Psoas muscle (tissue), 8 donors: ENCODE measurements at regions of chr5 and their contacts with region 1.

Region 1: DNA sequence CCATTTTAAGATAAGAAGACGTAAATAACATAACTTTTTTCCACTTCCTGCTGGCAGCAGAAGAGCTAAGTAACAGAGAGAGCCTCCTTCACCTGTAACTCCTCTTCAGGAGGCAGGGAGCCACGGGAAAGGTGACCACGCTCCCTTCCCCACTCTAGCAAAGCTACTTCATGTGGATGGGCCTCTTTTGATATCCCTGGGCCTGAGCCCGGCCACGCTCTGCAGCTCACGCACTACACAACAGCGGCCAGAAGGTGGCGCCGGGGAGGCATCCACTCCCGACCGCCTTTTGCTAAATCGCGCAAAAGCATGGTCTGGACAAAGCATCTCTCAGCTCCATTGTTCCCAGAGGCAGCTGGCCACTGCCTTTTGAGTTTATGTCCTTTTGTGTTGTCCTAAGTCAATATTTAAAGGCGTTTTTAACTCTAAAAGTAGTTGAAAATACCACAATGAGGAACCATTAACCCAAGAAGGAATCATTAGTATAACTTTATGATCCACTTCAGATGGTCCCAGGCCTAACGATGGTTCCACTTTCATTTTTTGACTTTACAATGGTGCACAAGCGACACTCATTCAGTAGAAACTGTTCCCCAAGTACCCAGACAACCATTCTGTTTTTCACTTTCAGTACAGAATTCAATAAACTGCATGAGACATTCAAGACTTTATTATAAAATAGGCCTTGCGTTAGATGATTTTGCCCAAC is 23.6 kb downstream of the CMBL start:
- DNase-seq: peak; percentile 87 to 92
- ATAC-seq: peak; percentile 45 to 61 (median 54)
- H3K4me3 ChIP-seq: no peak overlapping the region
- H3K27ac ChIP-seq: peak overlapping the region; percentile 50
- H3K4me1 ChIP-seq: peaks cover 40% of the 10 kb centered on the region
- H3K27me3 ChIP-seq: no peaks in the 10 kb centered on the region
- CTCF ChIP-seq: peak; percentile 94

Region 2: DNA sequence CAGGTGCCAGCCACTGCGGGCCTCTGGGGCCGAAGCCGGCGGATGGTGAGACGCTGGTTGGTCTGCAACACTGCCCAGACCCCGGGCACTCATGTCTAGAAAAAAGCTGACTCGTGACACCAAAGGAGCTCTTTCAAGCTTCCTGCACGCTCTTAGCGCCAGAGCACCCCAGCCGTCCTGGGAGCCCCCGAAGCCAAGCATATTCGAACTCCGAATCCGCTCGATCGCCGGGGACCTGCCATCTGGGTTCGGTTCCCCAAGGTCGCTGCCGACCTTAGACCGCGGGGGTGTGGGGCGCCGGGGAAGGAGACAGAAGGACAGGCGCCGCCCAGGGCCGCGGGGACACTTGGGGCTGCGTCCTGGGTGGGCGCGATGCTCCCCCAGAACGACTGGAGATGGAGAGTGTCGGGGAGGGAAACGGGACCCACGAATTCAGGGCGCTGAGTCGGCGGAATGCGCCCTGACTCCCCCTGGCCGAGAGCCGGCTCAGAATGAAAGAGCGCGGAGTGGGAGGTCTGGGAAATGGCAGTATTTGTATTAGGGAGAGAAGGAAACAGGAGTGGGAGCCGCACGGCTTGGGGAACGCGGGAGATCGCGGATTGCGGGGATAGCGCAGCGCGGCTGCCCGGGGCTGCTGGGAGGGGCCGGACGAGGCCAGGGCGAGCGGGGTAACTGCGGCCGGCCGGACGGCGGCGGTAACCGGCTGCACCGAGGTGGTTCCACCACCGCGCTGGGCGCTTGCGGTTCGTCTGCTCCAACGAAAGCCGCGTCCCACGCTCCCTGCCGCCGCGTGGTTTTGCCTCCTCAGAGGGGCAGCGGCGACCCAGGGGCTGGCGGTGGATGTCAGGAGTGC is 49.3 kb after region 1 on chr5:
- intact Hi-C with region 1: no loop called
- DNase-seq: peak; percentile 54 to 74
- ATAC-seq: peak; percentile 77 to 83 (median 82)
- H3K4me3 ChIP-seq: peak overlapping the region; percentile 75
- H3K27ac ChIP-seq: peak overlapping the region; percentile 77
- H3K4me1 ChIP-seq: peaks cover 37% of the 10 kb centered on the region
- H3K27me3 ChIP-seq: no peaks in the 10 kb centered on the region
- CTCF ChIP-seq: peak; percentile 30

Region 3: DNA sequence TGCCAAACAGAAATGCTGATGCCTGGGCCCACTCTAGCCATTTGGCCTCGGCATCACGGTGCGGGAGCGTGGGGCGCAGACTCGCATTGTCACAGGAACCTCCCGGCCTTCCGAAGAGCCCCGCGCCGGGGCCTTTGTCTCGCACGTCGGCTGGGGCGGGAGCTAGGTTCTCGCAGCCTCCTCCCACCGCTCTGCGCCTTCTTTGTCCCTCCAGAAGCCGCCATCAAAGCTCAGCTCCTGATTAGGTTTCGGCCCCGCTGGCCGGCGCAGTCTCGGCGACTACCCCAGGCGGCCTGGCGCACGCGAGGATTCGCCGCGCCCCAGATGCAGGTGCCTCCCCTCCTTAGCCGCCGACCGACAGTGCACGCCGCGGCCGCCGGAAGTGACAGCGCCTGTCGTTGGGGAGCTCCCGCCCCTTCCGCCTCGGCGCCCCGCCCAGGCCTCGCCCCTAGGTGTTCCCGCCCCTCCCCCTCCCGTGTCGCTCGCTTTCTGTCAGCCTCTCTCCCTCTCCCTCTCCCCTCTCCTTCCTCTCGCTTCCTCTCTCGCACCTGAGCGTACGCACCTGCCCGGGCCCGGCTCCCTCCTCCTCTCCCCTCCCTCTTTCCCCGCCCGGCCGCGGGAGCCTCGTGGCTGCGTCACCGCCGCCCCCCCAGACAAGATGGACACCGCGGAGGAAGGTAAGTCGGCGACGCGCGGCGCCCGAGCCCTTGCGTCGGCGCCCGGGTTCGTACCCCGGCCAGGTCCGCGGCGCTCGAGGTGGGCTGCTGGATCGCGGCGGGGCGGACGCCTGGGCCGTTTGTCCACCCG is 69.4 kb after region 1 on chr5 and contains the start of gene MARCHF6:
- intact Hi-C with region 1: loop called in 1 of 2 experiments (anchors 5 kb)
- DNase-seq: peak; percentile 95 to 98
- ATAC-seq: peak; percentile 96 to 98 (median 96)
- H3K4me3 ChIP-seq: peak within 1 kb of the TSS; percentile 95
- H3K27ac ChIP-seq: peak within 1 kb of the TSS; percentile 99
- H3K4me1 ChIP-seq: peaks cover 37% of the 10 kb centered on the region
- H3K27me3 ChIP-seq: no peaks in the 10 kb centered on the region
- CTCF ChIP-seq: no peak
- total RNA-seq, gene MARCHF6: 160 to 250 (median 193) TPM

Region 4: DNA sequence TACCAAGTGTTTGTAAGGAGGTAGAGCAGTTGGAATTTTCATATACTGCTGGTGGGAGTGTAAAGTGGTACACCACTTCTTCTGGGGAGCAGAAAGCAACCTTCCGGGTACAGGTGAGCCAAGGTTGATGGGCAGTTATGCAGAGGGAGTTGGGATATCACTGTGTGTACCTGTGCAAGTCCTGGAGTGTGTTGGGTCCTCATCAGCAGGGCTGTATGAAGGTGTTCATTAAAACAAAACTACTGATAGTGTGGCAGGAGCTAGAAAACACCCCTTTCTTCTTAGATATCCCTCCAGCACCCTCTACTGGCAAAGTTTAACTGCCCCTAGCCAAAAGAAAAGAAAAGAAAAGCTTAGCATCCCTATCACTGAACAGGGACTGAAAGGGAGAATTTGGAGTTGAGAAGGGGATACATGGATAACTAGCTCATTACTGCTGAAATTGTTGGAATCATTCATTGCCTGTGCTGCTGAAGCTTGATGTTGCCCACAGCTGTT is 80.2 kb after region 1 on chr5:
- intact Hi-C with region 1: loop called (anchors 5 to 10 kb)
- DNase-seq: no peak
- ATAC-seq: peak; percentile 42 to 70 (median 56)
- H3K4me3 ChIP-seq: no peak overlapping the region
- H3K27ac ChIP-seq: no peak overlapping the region
- H3K4me1 ChIP-seq: peaks cover 87% of the 10 kb centered on the region
- H3K27me3 ChIP-seq: no peaks in the 10 kb centered on the region
- CTCF ChIP-seq: peak; percentile 41

Region 5: GRCh38 chr5:10424124-10424731 is 140.1 kb after region 1 on chr5:
- intact Hi-C with region 1: loop called (anchors 5 kb)
- DNase-seq: no peak
- ATAC-seq: peak in 3 of 4 donors; percentile 59 to 85 (median 73)
- H3K4me3 ChIP-seq: no peak overlapping the region
- H3K27ac ChIP-seq: no peak overlapping the region
- H3K4me1 ChIP-seq: peaks cover 6% of the 10 kb centered on the region
- H3K27me3 ChIP-seq: no peaks in the 10 kb centered on the region
- CTCF ChIP-seq: peak; percentile 44

Region 6: GRCh38 chr5:10503997-10504793 is 220.1 kb after region 1 on chr5:
- intact Hi-C with region 1: no loop called
- DNase-seq: no peak
- ATAC-seq: peak; percentile 56 to 67 (median 60)
- H3K4me3 ChIP-seq: no peak overlapping the region
- H3K27ac ChIP-seq: no peak overlapping the region
- H3K4me1 ChIP-seq: peaks cover 7% of the 10 kb centered on the region
- H3K27me3 ChIP-seq: no peaks in the 10 kb centered on the region
- CTCF ChIP-seq: no peak

Region 7: DNA sequence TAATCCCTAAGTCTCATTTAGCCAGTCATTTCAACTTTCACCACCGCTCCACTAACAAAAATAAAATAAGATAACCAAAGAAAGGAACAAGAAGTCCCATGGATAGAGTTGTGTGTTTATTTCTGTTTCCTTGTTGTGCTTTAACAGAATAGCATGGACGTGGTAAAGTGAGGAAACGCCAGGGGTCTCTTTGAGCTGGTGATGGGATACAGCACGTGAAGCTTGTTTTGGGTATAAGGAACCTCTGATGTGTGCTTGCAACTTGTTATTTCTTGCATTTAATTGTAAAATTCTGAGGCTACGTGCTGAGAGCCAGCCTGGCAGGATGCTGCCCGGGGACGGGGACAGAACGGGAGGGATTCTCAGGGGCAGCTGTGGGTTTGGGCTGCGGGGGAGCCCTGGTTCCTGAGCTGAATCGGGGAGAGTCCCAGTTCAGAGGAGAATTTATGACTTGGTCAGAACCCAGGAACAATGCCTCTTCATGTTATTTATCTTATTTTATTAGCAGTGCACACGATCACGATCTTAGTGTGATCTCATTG is 343.1 kb after region 1 on chr5:
- intact Hi-C with region 1: loop called in 1 of 2 experiments (anchors 5 kb)
- DNase-seq: no peak
- ATAC-seq: peak; percentile 6 to 35 (median 12)
- H3K4me3 ChIP-seq: peak overlapping the region; percentile 57
- H3K27ac ChIP-seq: peak overlapping the region; percentile 14
- H3K4me1 ChIP-seq: peaks cover 9% of the 10 kb centered on the region
- H3K27me3 ChIP-seq: no peaks in the 10 kb centered on the region
- CTCF ChIP-seq: no peak